ENCODE measurements at regions of chr14 and their contacts with region 1.

Region 1: DNA sequence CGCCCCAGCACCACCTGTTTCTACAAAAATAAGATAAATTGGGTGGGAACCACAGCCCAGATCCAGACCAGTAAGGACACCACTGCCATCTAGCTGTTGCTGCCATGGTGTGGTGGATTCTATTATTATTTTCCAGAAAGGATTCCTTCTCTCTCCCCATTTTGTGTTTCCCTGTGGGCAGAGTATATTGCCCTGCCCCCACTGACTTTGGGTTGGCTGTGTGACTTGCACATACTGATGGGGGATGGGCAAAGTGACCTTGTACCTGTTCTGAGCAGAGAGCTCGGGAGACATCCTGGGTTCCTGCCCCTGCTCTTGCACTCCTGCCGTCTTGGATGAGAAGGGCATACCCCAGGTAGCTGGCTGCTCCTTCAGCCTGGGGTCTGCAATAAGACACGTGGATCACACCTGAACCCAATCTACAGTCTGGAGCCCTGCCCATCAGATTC is 24.3 kb downstream of the MOAP1 start:
- DNase-seq: no peak
- H3K4me3 ChIP-seq: no peak overlapping the region
- H3K27ac ChIP-seq: no peak overlapping the region
- H3K27me3 ChIP-seq: no peaks in the 10 kb centered on the region
- CTCF ChIP-seq: peak; percentile 51

Region 2: DNA sequence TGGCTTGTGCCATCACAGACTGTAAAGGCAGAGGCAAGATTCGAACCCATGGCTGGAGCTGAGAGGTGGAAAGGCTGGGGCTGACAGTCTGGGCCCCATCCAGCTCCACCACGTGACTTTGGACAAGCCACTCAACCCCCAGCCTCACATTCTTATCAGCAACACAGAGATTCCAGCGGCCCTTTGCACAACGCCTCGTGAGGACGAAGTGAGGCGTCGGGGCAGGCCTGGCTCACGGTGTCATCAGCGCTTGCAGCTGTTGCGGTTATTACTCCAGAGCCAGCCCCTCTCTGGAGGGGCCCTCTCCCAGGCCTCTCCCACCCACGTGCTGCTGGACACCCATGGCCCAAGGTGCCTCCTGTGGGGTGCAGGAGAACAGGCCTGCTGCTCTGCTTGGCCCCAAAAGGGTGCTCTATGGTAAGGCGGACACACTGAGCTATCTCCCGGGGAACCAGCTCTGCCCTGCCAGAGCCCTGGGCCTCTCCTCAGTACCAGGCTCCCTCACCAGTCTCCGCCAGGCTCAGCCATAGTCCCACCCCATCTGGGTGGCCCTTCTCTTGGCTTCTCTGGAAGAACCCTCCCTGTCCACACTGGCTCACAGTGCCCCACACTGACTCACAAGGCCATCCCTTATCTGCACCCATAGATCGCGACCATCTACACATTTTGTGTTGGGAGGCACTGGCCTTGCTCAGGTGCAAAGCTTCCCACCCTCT is 216.4 kb before region 1 on chr14:
- CTCF ChIA-PET with region 1: interaction called, 11 read pairs
- POLR2A ChIA-PET with region 1: no interaction called
- DNase-seq: no peak
- H3K4me3 ChIP-seq: no peak overlapping the region
- H3K27ac ChIP-seq: no peak overlapping the region
- H3K27me3 ChIP-seq: no peaks in the 10 kb centered on the region
- CTCF ChIP-seq: no peak

Region 3: GRCh38 chr14:93146119-93146518 is 14.3 kb before region 1 on chr14:
- CTCF ChIA-PET with region 1: no interaction called
- POLR2A ChIA-PET with region 1: no interaction called
- DNase-seq: no peak
- H3K4me3 ChIP-seq: no peak overlapping the region
- H3K27ac ChIP-seq: no peak overlapping the region
- H3K27me3 ChIP-seq: no peaks in the 10 kb centered on the region
- CTCF ChIP-seq: no peak

Region 4: DNA sequence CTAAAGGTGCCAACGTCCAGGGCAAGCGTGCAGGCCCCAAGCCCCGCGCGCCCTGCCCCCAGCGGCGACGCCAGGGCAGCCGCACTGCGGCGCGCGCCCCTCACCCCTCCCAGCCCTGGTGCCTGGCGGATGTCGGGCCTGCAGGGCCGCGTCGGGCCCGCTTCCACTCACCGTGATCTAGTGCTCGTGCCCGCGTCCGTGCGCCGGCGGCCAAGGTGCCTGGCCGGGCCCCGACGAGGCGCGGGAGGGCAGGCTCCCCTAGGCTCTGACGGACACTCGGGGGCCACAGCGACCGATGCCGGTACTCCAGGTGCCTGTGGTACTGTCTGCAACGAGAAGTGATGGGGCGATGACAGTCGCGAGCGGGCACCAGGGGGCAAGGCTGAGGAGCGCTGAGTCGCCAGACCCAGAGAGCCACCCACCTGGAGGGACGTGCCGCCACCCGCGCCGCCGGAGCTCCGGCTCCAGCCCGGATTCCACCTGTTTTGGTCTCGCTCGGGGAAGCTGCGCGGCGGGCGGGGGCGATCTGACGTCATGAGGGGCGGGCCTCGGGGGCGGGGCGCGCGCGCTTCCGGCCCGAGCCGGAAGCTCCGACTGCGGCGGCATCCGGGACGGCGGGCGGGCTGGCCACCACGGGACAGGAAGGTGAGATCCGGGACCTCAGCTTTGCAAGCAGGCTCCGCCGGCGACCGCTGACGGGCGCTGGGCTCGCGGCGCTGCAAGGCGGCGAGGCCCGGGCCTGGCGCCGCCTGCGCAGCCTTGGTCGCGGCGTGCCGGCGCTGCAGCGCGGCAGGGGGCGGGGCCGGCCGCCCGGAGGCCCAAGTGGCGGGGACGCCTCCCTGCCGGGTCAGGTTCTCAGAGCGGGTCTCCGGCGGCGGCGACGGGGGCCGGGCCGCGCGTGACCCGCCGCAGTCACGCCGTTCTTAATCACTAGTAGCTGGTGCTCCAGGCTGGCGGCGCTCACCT is 24.3 kb after region 1 on chr14 and contains the starts of genes LYSET and MOAP1:
- CTCF ChIA-PET with region 1: no interaction called
- POLR2A ChIA-PET with region 1: no interaction called
- DNase-seq: peak; percentile 36
- H3K4me3 ChIP-seq: peak within 1 kb of the TSS; percentile 98
- H3K27ac ChIP-seq: peak within 1 kb of the TSS; percentile 69
- H3K27me3 ChIP-seq: no peaks in the 10 kb centered on the region
- CTCF ChIP-seq: no peak
- polyA plus RNA-seq, gene LYSET: 12.2 and 15.6 TPM in 2 replicates
- polyA plus RNA-seq, gene MOAP1: 16.7 and 21.0 TPM in 2 replicates